ENCODE measurements at regions of chr9 and their contacts with region 1.

Region 1: GRCh38 chr9:92808726-92809451 is 44.3 kb upstream of the BICD2 start:
- DNase-seq: peak; percentile 46 to 64 (median 55)
- H3K4me3 ChIP-seq: peak overlapping the region in 1 of 3 experiments; percentile 42
- H3K4me3 Mint-ChIP-seq: peak overlapping the region; percentile 69 to 93
- H3K27ac ChIP-seq: no peak overlapping the region
- H3K27ac Mint-ChIP-seq: no peak overlapping the region
- H3K4me1 ChIP-seq: peaks cover 16 to 23% of the 10 kb centered on the region in 2 donors
- H3K4me1 Mint-ChIP-seq: peaks cover 16% of the 10 kb centered on the region
- H3K27me3 ChIP-seq: peaks cover 76 to 95% of the 10 kb centered on the region in 2 donors
- H3K27me3 Mint-ChIP-seq: peaks cover 68 to 73% (median 70%) of the 10 kb centered on the region in 3 donors
- CTCF ChIP-seq: no peak

Region 2: GRCh38 chr9:93254821-93255468 is 446.1 kb after region 1 on chr9:
- intact Hi-C with region 1: loop called in 1 of 2 experiments (anchors 10 kb)
- DNase-seq: no peak
- H3K4me3 ChIP-seq: no peak overlapping the region
- H3K4me3 Mint-ChIP-seq: no peak overlapping the region
- H3K27ac ChIP-seq: no peak overlapping the region
- H3K27ac Mint-ChIP-seq: no peak overlapping the region
- H3K4me1 ChIP-seq: no peaks in the 10 kb centered on the region
- H3K4me1 Mint-ChIP-seq: no peaks in the 10 kb centered on the region
- H3K27me3 ChIP-seq: no peaks in the 10 kb centered on the region
- H3K27me3 Mint-ChIP-seq: peaks cover 11 to 29% (median 12%) of the 10 kb centered on the region in 3 donors
- CTCF ChIP-seq: no peak